Gastrocnemius medialis (tissue), 4 donors: ENCODE measurements at regions of chr3 and their contacts with region 1.

Region 1: GRCh38 chr3:46368569-46368968 is 2.2 kb upstream of the CCR5 start:
- DNase-seq: peak in 1 of 2 donors; percentile 35
- ATAC-seq: peak in 1 of 2 donors; percentile 24
- H3K4me3 ChIP-seq: no peak overlapping the region
- H3K27ac ChIP-seq: no peak overlapping the region
- H3K4me1 ChIP-seq: no peaks in the 10 kb centered on the region
- H3K27me3 ChIP-seq: peaks cover 0 to 10% (median 2%) of the 10 kb centered on the region in 3 donors
- CTCF ChIP-seq: no peak
- POLR2A ChIP-seq: no peak

Region 2: DNA sequence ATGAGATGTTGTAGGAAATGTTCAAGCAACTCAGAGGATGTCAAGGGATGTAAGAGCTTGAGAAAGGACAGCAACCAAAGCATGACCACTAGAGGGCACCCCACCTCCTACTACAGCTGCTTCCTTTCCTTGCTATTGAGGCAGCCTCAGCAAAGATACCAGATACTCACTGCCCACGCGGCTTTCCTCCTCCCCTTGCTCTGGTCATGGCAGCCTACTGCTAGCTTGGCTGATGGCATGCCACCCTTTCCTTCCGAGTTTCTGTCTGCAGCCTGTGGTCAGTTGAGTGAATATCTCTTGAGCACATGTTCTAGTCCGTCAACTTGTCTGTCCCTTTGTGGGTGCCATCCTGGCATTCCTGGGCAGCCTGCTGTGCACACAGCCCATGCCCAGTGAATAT is 429.7 kb before region 1 on chr3:
- in situ Hi-C with region 1: loop called in 1 of 4 experiments (anchors 25 kb)
- intact Hi-C with region 1: no loop called
- DNase-seq: peak; percentile 84 to 90
- ATAC-seq: peak; percentile 89 to 96
- H3K4me3 ChIP-seq: no peak overlapping the region
- H3K27ac ChIP-seq: peak overlapping the region; percentile 49 to 80 (median 72)
- H3K4me1 ChIP-seq: peaks cover 15 to 33% of the 10 kb centered on the region in 2 donors
- H3K27me3 ChIP-seq: no peaks in the 10 kb centered on the region
- CTCF ChIP-seq: peak; percentile 83 to 93 (median 91)
- POLR2A ChIP-seq: no peak

Region 3: DNA sequence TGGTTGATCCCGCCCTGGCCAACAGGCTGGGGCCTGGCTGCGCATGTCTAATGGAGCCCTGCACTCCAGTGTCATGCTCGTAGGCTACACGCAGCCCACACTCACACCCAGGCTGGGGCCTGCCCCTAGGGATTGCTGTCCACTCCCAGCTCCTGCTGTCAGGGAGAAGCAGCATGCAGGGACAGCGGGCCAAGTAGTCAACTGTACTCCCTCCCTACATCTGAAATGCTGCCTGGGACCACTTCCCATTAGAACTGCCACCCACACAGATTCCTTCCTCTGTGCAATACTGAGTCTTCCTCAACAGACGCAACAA is 308.8 kb after region 1 on chr3:
- in situ Hi-C with region 1: no loop called
- intact Hi-C with region 1: no loop called
- DNase-seq: no peak
- ATAC-seq: peak in 1 of 2 donors; percentile 14
- H3K4me3 ChIP-seq: no peak overlapping the region
- H3K27ac ChIP-seq: no peak overlapping the region
- H3K4me1 ChIP-seq: no peaks in the 10 kb centered on the region
- H3K27me3 ChIP-seq: no peaks in the 10 kb centered on the region
- CTCF ChIP-seq: no peak
- POLR2A ChIP-seq: no peak